ENCODE measurements at regions of chr17 and their contacts with region 1.

Region 1: GRCh38 chr17:70622368-70623260 is 453.3 kb downstream of the KCNJ2 start:
- DNase-seq: peak in 3 of 4 experiments; percentile 9 to 43 (median 14)
- ATAC-seq: no peak
- H3K4me3 ChIP-seq: no peak overlapping the region
- H3K27ac ChIP-seq: no peak overlapping the region
- H3K4me1 ChIP-seq: no peaks in the 10 kb centered on the region
- H3K27me3 ChIP-seq: no peaks in the 10 kb centered on the region
- CTCF ChIP-seq: peak; percentile 28 to 40 (median 29); a peak in 3 of 6 replicates
- EP300 ChIP-seq: no peak
- POLR2A ChIP-seq: no peak
- RAD21 ChIP-seq: peak; percentile 21 to 56; a peak in 2 of 4 replicates

Region 2: GRCh38 chr17:69523244-69523861 is 1099.3 kb before region 1 on chr17:
- CTCF ChIA-PET with region 1: no interaction called
- POLR2A ChIA-PET with region 1: no interaction called
- in situ Hi-C with region 1: no loop called
- intact Hi-C with region 1: loop called (anchors 2 kb)
- DNase-seq: peak; percentile 7 to 24 (median 14)
- ATAC-seq: 0 out of 3 replicates have a peak, but pooled peaks have one; percentile 38
- H3K4me3 ChIP-seq: no peak overlapping the region
- H3K27ac ChIP-seq: no peak overlapping the region
- H3K4me1 ChIP-seq: no peaks in the 10 kb centered on the region
- H3K27me3 ChIP-seq: no peaks in the 10 kb centered on the region
- CTCF ChIP-seq: peak; percentile 26 to 45 (median 44); a peak in 4 of 6 replicates
- EP300 ChIP-seq: no peak
- POLR2A ChIP-seq: no peak
- RAD21 ChIP-seq: peak; percentile 11 to 54; a peak in 3 of 4 replicates

Region 3: DNA sequence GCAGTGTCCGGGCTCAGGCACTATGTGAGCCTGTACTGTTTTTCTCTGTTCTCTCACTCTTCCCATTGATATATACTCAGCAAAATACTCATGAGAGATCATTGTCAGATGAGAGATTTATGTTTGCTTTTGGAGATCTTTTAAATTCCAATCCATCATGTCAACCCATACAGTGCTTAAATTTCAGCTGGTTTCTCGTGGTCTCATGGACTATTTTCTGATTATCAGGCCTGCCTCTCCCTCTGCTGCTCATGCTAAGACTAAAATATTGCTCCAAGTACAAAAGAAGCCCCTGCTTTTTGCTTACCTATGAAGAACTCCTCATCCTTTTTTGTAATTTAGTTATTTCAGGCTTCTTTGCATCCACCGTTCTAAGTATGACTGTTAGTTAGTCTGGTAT is 93.9 kb after region 1 on chr17:
- CTCF ChIA-PET with region 1: no interaction called
- POLR2A ChIA-PET with region 1: no interaction called
- in situ Hi-C with region 1: no loop called
- intact Hi-C with region 1: no loop called
- DNase-seq: no peak
- ATAC-seq: no peak
- H3K4me3 ChIP-seq: no peak overlapping the region
- H3K27ac ChIP-seq: no peak overlapping the region
- H3K4me1 ChIP-seq: no peaks in the 10 kb centered on the region
- H3K27me3 ChIP-seq: no peaks in the 10 kb centered on the region
- CTCF ChIP-seq: no peak
- EP300 ChIP-seq: no peak
- POLR2A ChIP-seq: no peak
- RAD21 ChIP-seq: no peak